ENCODE measurements at regions of chr6 and their contacts with region 1.

Region 1: DNA sequence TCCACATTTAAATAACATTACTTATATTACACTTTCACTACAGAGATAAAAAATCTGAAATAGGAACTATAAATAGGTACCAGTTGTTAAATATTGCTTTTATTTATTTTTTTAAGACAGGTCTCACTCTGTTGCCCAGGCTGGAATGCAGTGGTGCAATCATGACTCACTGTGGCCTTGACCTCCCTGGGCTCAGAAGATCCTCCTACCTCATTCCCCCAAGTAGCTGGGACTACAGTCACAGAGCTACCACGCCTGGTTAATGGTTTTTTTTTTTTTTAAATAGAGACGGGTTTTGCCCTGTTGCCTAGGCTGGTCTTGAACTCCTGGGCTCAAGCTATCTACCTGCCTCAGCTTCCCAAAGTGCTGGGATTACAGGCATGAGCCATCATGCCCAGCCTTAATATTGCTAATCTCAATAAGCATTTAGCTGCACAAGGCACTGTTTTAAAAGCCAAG is 17.3 kb downstream of the EEF1E1 start:
- DNase-seq: peak; percentile 95
- ATAC-seq: peak; percentile 85
- H3K4me3 ChIP-seq: no peak overlapping the region
- H3K27ac ChIP-seq: peak overlapping the region; percentile 54; the same call in 1 of the 2 replicates
- H3K4me1 ChIP-seq: peaks cover 20% of the 10 kb centered on the region
- H3K27me3 ChIP-seq: no peaks in the 10 kb centered on the region
- CTCF ChIP-seq: no peak
- POLR2A ChIP-seq: no peak
- RAD21 ChIP-seq: no peak

Region 2: DNA sequence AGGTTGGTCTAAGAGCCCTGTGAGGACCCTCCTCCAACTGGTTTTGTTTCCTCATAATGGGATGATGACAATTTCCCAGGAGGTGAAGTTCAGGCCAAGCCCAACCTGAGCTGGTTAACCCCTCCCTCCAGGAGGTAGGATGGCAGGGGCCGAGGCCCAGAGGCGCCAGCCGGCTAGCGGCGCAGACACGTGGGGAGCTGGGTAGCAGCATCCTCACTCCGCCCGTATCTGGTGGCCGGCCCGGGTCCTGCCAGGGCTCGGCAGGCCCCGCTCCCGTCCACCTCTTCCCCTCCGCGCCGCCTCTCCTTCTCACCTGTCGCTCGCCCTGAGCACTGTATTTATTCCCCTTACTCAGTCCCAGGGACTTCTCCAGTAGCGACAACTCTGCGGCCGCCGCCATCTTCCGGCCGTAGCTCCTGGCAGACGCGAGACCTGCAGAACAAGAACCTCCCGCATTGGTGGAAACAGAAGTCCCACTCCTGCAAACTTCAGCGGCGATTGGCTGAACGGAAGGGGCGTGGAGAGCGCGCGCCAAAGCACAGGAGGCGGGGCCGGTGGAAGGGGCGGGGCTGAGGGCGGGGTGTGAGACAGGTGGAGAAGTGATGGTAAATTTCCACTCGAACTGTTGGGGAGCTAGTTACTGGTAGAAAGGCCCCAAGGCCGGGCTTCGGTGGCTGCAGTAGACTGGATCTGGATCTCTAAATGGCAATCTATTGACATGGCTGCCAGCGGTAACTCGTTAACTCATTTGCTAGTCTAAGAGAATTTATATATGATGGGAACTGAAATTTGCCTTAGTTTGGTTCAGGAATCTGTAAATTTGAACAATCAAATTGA is 17.3 kb after region 1 on chr6 and contains the start of gene EEF1E1:
- CTCF ChIA-PET with region 1: interaction called, 5 read pairs
- POLR2A ChIA-PET with region 1: interaction called, 6 read pairs
- dilution Hi-C with region 1: no loop called
- in situ Hi-C with region 1: no loop called
- intact Hi-C with region 1: loop called (anchors 2 kb)
- DNase-seq: peak; percentile 94
- ATAC-seq: peak; percentile 99
- H3K4me3 ChIP-seq: peak within 1 kb of the TSS; percentile 92
- H3K27ac ChIP-seq: peak within 1 kb of the TSS; percentile 60
- H3K4me1 ChIP-seq: no peaks in the 10 kb centered on the region; the same call in 1 of the 2 replicates
- H3K27me3 ChIP-seq: no peaks in the 10 kb centered on the region
- CTCF ChIP-seq: no peak
- POLR2A ChIP-seq: peak; percentile 81
- RAD21 ChIP-seq: no peak
- total RNA-seq, gene EEF1E1: 60.0 and 65.8 TPM in 2 replicates

Region 3: GRCh38 chr6:8642131-8642530 is 557.0 kb after region 1 on chr6:
- CTCF ChIA-PET with region 1: no interaction called
- POLR2A ChIA-PET with region 1: no interaction called
- dilution Hi-C with region 1: no loop called
- in situ Hi-C with region 1: no loop called
- intact Hi-C with region 1: no loop called
- DNase-seq: no peak
- ATAC-seq: no peak
- H3K4me3 ChIP-seq: no peak overlapping the region
- H3K27ac ChIP-seq: no peak overlapping the region
- H3K4me1 ChIP-seq: no peaks in the 10 kb centered on the region
- H3K27me3 ChIP-seq: no peaks in the 10 kb centered on the region
- CTCF ChIP-seq: no peak
- POLR2A ChIP-seq: no peak
- RAD21 ChIP-seq: no peak

Measured in IMR-90 (cell line).